PC-3 (cell line): ENCODE measurements at regions of chr17 and their contacts with region 1.

Region 1: GRCh38 chr17:82668631-82669099 is 20.4 kb upstream of the WDR45B start:
- DNase-seq: peak; percentile 73
- ATAC-seq: peak; percentile 100
- H3K4me3 ChIP-seq: peak overlapping the region; percentile 6; the same call in 1 of the 2 replicates
- H3K27ac ChIP-seq: no peak overlapping the region
- H3K4me1 ChIP-seq: no peaks in the 10 kb centered on the region
- H3K27me3 ChIP-seq: no peaks in the 10 kb centered on the region
- CTCF ChIP-seq: peak; percentile 75

Region 2: DNA sequence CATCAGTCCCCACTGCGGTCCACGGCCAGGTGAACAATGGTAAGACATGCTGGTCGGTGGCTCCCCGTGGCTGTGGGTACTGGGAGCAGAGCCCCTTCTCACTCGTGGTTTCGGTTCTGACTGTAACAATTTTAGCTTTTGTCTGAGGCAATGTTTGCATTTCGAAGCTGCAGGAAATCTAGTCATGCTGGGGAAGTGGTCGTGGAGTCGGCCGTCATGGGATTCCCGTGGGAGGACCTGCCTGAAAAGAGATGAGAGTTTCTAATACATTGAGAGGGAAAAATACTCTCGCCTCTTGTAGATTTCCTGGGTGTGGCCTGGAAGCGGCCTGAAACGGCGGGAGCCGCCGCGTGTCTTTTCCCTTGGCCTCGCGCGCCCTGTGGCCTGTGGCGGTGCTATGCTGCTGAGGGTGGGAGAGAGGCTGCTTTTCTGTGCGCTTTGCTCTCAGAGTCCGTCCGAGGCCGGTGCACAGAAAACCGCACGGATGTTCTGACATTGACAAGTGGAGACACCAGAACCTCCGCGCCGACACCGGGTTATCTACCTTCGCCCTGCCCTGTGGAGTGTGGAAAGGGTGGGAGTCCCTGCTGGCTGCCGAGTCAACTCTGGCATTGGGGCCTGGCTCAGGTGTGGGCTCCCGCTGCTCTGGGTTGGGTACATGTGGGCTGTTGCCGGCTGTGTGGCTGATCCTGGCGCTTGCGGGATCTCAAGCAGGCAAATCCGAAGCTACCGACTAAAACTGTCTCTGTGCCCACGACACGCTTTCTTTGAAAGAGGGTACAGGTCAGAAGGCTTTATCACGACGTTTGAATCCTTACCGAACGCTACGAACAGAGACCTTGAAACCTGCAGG is 81.2 kb before region 1 on chr17:
- CTCF ChIA-PET with region 1: no interaction called
- POLR2A ChIA-PET with region 1: interaction called, 12 read pairs
- intact Hi-C with region 1: no loop called
- DNase-seq: no peak
- ATAC-seq: no peak
- H3K4me3 ChIP-seq: no peak overlapping the region
- H3K27ac ChIP-seq: 0 out of 2 replicates have a peak overlapping the region, but pooled peaks have one; percentile 1
- H3K4me1 ChIP-seq: peaks cover 5% of the 10 kb centered on the region; the same call in 1 of the 2 replicates
- H3K27me3 ChIP-seq: no peaks in the 10 kb centered on the region
- CTCF ChIP-seq: no peak

Region 3: DNA sequence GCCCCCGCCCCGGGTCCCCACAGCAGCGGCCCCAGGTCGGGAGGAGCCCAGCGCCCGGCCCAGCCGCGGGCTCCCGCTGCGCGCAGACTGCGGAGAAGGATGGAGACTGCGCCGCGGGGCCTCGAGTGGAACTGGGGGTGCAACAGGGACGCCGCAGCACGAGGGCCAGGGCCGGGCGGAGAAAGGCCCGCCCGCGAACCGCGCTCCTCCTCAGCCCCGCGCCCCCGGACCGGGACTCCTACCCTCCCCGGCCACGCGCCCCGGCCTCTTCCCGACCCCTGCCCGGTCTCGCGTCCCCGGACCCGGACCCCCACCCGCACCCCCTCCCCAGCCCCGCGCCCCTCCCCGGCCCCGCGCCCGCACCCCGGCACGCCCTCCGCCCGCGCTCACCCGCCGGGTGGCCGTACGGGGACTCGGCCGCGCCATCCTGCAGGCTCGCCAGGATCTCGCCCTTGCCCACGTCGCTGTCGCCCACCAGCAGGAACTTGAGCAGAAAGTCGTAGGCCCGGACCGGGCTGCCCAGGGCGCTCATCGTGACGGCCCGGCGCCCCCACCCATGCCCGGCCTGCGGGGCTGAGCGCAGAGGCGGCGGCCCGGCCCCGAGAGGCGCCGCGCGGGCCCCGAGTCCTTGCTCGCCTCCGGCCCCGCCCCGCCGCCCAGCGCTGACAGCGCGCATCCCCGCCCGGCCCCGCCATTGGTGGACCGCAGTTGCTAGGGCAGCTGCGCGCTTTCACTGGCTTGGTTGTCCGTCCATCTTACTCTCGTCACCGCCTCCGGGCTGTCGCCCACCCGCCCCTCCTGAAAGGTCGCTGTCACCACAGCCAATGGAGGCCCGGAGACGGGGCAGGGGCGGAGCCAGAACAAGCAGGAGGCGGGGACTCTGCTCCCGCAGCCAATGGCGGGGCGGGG is 29.7 kb after region 1 on chr17 and contains the start of gene RAB40B:
- CTCF ChIA-PET with region 1: no interaction called
- POLR2A ChIA-PET with region 1: no interaction called
- intact Hi-C with region 1: no loop called
- DNase-seq: peak; percentile 98
- ATAC-seq: peak; percentile 96
- H3K4me3 ChIP-seq: peak within 1 kb of the TSS; percentile 88
- H3K27ac ChIP-seq: no peak within 1 kb of the TSS
- H3K4me1 ChIP-seq: peaks cover 5% of the 10 kb centered on the region; the same call in 1 of the 2 replicates
- H3K27me3 ChIP-seq: no peaks in the 10 kb centered on the region
- CTCF ChIP-seq: no peak
- total RNA-seq, gene RAB40B: 16.5 and 22.4 TPM in 2 replicates

Region 4: DNA sequence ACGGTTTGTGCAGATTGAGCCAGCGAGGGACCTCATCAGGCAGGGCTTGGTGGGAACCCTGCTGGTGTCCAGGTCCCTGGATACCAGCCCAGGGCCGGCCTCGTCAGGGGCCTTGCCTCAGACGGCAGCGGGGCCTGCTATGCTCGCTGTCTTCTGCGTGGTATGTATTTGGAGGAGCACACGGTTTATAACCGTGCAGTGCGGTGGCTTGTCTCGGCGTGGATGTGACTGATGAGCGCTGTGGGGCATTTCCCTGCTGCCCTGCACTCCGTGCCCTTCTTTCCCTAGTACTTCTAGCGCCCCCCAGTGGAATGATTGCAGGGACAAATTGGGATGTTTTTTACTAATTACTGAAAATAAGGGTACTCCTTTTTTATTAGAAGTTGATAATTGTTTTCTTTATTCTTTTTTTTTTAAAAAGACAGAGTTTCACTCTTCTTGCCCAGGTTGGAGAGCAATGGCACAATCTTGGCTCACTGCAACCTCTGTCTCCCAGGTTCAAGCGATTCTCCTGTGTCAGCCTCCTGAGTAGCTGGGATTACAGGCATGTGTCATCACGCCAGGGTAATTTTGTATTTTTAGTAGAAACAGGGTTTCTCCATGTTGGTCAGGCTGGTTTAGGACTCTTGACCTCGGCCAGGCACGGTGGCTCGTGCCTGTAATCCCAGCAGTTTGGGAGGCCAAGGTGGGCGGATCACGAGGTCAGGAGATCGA is 98.5 kb after region 1 on chr17:
- CTCF ChIA-PET with region 1: interaction called, 3 read pairs
- POLR2A ChIA-PET with region 1: no interaction called
- intact Hi-C with region 1: loop called (anchors 2 kb)
- DNase-seq: peak; percentile 55
- ATAC-seq: no peak
- H3K4me3 ChIP-seq: no peak overlapping the region
- H3K27ac ChIP-seq: no peak overlapping the region
- H3K4me1 ChIP-seq: no peaks in the 10 kb centered on the region
- H3K27me3 ChIP-seq: no peaks in the 10 kb centered on the region
- CTCF ChIP-seq: peak; percentile 80

Region 5: DNA sequence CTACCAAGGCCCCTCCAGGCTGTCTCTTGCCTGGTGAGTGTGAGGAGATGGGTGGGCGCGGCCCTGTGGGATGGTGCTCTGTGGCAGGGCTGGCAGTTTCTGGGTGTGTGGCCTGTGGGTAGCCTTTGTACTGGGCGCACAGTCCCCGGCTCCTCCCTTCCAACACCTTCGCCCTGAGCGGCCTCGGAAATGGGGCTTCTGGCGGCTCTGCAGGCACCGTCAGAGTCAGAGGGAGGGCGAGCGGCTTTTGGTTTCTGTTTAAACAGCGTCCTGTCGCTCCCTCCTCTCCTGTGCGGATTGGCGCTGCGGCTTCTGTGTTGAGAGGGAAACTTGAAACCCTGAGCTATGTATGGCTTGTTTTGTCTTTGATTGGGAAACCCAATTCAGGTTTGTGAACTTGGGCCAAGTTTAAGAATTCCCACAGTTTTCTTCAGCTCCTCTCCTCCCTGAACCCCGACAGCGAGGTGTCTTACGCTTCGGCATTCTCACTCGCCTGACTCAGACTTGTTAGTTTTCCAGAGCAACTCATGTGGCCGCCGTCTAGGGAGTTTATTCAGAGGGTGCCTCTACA is 179.4 kb after region 1 on chr17:
- CTCF ChIA-PET with region 1: no interaction called
- POLR2A ChIA-PET with region 1: no interaction called
- intact Hi-C with region 1: no loop called
- DNase-seq: no peak
- ATAC-seq: no peak
- H3K4me3 ChIP-seq: no peak overlapping the region
- H3K27ac ChIP-seq: no peak overlapping the region
- H3K4me1 ChIP-seq: no peaks in the 10 kb centered on the region
- H3K27me3 ChIP-seq: no peaks in the 10 kb centered on the region
- CTCF ChIP-seq: no peak

Region 6: GRCh38 chr17:82938873-82939620 is 270.4 kb after region 1 on chr17:
- CTCF ChIA-PET with region 1: no interaction called
- POLR2A ChIA-PET with region 1: no interaction called
- intact Hi-C with region 1: no loop called
- DNase-seq: no peak
- ATAC-seq: no peak
- H3K4me3 ChIP-seq: no peak overlapping the region
- H3K27ac ChIP-seq: no peak overlapping the region
- H3K4me1 ChIP-seq: no peaks in the 10 kb centered on the region
- H3K27me3 ChIP-seq: no peaks in the 10 kb centered on the region
- CTCF ChIP-seq: no peak